ENCODE measurements at regions of chr1 and their contacts with region 1.

Region 1: GRCh38 chr1:99481391-99481996 is 164.4 kb upstream of the PALMD start:
- DNase-seq: peak in 1 of 2 donors; percentile 12
- ATAC-seq: peak; percentile 66 to 71
- H3K4me3 ChIP-seq: no peak overlapping the region
- H3K27ac ChIP-seq: no peak overlapping the region
- H3K4me1 ChIP-seq: no peaks in the 10 kb centered on the region
- H3K27me3 ChIP-seq: no peaks in the 10 kb centered on the region
- CTCF ChIP-seq: peak; percentile 50 to 72 (median 69)
- POLR2A ChIP-seq: no peak

Region 2: DNA sequence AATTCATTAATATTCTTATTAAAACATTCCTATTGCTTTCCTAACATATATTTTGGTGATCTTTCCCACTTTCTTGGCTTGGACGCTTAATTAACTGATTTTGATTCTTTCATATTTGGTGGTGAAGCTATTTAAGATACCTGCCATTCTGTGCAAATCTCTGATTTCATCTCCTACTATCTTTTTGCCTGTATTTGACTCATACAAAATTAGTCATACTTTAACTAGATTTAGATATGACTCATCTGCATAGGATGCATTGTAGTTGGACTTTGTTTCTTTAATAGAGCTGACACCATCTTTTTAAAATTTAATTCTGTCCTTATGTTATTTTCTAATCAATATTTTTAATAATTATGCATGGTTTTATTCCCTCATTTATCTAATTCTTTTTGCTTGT is 311.0 kb before region 1 on chr1:
- in situ Hi-C with region 1: loop called in 2 of 4 experiments (anchors 10 to 25 kb)
- intact Hi-C with region 1: no loop called
- DNase-seq: no peak
- ATAC-seq: no peak
- H3K4me3 ChIP-seq: no peak overlapping the region
- H3K27ac ChIP-seq: no peak overlapping the region
- H3K4me1 ChIP-seq: no peaks in the 10 kb centered on the region
- H3K27me3 ChIP-seq: no peaks in the 10 kb centered on the region
- CTCF ChIP-seq: no peak
- POLR2A ChIP-seq: no peak

Region 3: DNA sequence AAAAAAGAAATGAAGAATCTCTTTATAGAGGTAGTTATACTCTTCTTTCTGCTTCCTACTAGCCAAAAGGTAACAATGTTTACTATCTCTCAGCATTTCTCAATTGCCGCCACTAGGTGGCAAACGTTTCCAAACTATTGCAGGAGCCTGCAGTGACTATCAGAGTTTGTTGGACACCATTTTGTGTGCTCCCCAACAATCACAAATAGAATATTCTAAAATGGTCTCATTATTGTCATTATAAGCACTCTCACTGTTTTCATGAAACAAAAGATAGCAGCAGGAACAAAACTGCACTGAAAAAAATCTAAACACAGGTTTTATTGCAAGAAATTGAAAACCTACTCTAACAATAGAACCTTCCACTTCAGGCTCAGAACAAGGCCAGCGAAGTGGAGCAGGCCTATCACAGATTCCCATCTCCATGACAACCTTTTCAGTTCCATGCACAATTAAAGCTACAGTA is 301.1 kb before region 1 on chr1:
- in situ Hi-C with region 1: loop called in 3 of 4 experiments (anchors 10 to 25 kb)
- intact Hi-C with region 1: loop called (anchors 2 kb)
- DNase-seq: peak; percentile 43 to 56
- ATAC-seq: peak; percentile 91 to 97
- H3K4me3 ChIP-seq: no peak overlapping the region
- H3K27ac ChIP-seq: peak overlapping the region in 1 of 4 donors; percentile 28
- H3K4me1 ChIP-seq: peaks cover 0 to 8% of the 10 kb centered on the region in 2 donors
- H3K27me3 ChIP-seq: no peaks in the 10 kb centered on the region
- CTCF ChIP-seq: peak; percentile 74 to 81 (median 76)
- POLR2A ChIP-seq: no peak

Region 4: GRCh38 chr1:99441299-99442095 is 40.0 kb before region 1 on chr1:
- in situ Hi-C with region 1: no loop called
- intact Hi-C with region 1: no loop called
- DNase-seq: no peak
- ATAC-seq: no peak
- H3K4me3 ChIP-seq: no peak overlapping the region
- H3K27ac ChIP-seq: no peak overlapping the region
- H3K4me1 ChIP-seq: no peaks in the 10 kb centered on the region
- H3K27me3 ChIP-seq: no peaks in the 10 kb centered on the region
- CTCF ChIP-seq: no peak
- POLR2A ChIP-seq: no peak